Heart right ventricle (tissue), 16 donors: ENCODE measurements at regions of chr3 and their contacts with region 1.

Region 1: GRCh38 chr3:17645072-17645698 is 97.2 kb downstream of the TBC1D5 start:
- DNase-seq: peak in 1 of 2 donors; percentile 46
- ATAC-seq: peak in 7 of 8 donors; percentile 28 to 75 (median 58)
- H3K4me3 ChIP-seq: no peak overlapping the region
- H3K27ac ChIP-seq: no peak overlapping the region
- H3K4me1 ChIP-seq: peaks cover 0 to 28% (median 8%) of the 10 kb centered on the region in 9 donors
- H3K27me3 ChIP-seq: no peaks in the 10 kb centered on the region
- CTCF ChIP-seq: peak; percentile 48 to 81 (median 74)

Region 2: DNA sequence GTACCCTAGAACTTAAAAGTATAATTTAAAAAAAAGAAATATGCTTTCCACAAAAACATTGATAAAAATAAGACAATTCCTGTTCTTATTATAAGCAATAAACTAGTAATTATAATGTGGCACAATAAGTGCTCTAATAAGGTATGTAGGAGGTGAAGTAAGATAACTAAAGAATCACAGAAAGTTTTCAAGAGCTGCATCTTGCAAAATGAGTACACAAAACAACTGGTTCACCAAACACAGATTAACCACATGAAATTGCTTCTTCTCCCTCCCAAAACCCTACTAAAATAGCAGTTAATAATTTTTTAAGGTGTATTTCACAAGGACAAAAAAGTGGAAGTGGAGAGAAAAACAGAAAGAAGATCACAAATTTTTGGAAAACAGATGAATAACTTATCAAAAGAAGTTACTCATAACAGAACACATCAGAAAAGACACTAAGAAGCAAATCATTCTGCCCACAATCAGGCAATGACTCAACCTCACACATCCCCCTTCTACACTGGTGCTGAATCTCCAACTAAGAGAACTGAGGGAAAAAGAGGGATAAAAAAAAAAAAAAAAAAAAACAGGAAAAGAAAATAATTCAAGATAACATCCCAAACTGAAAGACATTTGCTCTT is 33.0 kb after region 1 on chr3:
- intact Hi-C with region 1: no loop called
- DNase-seq: no peak
- ATAC-seq: no peak
- H3K4me3 ChIP-seq: no peak overlapping the region
- H3K27ac ChIP-seq: no peak overlapping the region
- H3K4me1 ChIP-seq: peaks cover 0 to 6% (median 0%) of the 10 kb centered on the region in 9 donors
- H3K27me3 ChIP-seq: no peaks in the 10 kb centered on the region
- CTCF ChIP-seq: no peak

Region 3: DNA sequence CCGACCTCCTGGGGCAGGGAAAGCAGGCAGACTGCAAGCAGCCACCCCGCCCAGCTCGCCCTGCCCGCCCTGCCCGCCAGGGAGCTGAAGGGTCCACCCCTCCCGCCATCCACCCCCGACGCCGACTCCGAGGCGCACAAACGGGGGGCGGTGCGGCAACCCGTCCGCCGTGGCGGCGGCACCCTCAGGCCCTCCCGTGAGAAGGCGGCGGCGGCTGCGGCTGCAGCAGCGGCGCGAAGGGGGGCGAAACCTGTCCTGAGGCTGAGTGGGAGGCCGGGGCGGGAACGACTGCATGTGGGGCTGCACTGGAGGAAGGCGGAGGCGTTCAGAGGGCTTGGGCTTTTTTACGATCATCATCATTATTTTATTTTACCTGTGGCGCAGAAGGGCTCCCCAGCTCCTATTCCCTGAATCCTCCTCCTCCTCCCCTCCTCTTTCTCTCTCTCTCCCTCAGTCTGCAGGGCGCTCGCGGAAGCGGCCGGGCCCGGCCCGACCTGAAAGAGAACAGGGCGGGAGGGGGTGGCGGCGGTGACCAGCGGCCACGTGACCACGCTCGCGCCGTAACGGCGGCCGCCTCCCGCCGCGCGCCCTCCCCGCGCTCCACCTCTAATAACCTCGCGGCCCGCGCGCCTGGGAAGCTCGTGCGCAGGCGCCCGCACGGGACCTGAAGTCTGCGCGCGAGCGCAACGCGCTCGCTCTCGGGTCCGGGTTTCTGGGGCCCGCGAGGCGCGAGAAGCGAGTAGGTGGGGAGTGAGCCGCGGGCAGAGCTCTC is 97.1 kb after region 1 on chr3 and contains the start of gene TBC1D5:
- intact Hi-C with region 1: loop called in 2 of 10 experiments (anchors 5 kb)
- DNase-seq: peak; percentile 95 to 97
- ATAC-seq: peak; percentile 95 to 99 (median 96)
- H3K4me3 ChIP-seq: peak within 1 kb of the TSS; percentile 76 to 93 (median 88)
- H3K27ac ChIP-seq: peak within 1 kb of the TSS; percentile 94 to 100 (median 98)
- H3K4me1 ChIP-seq: peaks cover 3 to 54% (median 33%) of the 10 kb centered on the region in 9 donors
- H3K27me3 ChIP-seq: no peaks in the 10 kb centered on the region
- CTCF ChIP-seq: peak in 2 of 9 donors; percentile 7 to 13
- total RNA-seq, gene TBC1D5: 22.8 to 35.6 (median 31.0) TPM

Region 4: DNA sequence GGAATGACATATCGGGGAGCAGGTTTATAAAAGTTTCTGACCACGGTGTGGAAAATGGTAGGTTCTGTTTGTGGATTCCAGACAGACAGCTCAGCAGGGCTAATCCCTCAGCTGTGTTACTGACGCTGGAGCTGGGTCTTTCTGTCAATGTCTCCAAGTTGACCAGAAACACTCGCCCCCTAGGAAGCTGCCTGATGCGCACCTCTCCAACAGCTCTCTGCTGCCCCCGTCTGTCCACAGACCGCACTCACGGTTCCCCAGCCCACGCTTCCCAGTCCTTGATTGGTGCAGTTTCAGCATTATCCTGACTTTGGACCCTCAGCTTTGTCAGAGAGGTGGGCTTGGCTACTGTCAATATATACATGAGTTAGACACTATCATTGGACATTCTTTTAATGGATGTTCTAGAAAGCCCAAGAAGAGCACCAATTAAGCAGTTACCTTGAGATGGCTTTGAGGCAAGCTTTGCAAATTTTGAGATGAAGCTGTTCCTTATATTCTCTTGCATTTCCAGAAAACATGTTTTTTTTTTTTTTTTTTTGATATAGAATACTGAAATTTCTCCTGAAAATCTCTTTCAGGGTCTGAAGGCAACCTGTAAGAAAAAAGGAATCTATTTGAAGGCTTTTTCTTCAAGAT is 196.1 kb after region 1 on chr3:
- intact Hi-C with region 1: loop called in 9 of 10 experiments (anchors 2 to 10 kb)
- DNase-seq: peak; percentile 70 to 76
- ATAC-seq: peak; percentile 74 to 91 (median 83)
- H3K4me3 ChIP-seq: no peak overlapping the region
- H3K27ac ChIP-seq: no peak overlapping the region
- H3K4me1 ChIP-seq: no peaks in the 10 kb centered on the region
- H3K27me3 ChIP-seq: peaks cover 0 to 18% (median 0%) of the 10 kb centered on the region in 7 donors
- CTCF ChIP-seq: peak; percentile 85 to 97 (median 95)